HCT116 (cell line): ENCODE measurements at regions of chr17 and their contacts with region 1.

Region 1: DNA sequence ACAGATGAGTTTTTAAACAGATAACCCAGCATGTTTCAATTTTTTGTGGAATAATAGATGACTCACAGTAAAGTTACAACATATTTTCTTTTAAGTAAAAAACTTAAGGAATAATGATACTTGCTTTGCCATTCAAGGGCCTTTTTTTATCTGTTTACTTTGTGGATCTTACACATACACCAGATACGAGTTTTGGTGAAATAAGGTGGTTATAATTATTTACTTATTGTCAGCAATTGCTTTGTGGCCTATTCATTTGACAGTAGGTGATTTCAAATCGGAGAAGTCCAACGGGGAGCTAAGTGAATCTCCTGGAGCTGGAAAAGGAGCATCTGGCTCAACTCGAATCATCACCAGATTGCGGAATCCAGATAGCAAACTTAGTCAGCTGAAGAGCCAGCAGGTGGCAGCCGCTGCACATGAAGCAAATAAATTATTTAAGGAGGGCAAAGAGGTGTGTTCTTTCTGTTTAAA is 66.3 kb downstream of the BPTF start:
- DNase-seq: peak; percentile 6
- ATAC-seq: peak; percentile 57; the same call in 1 of the 2 replicates
- H3K4me3 ChIP-seq: no peak overlapping the region
- H3K27ac ChIP-seq: no peak overlapping the region
- H3K4me1 ChIP-seq: no peaks in the 10 kb centered on the region
- H3K27me3 ChIP-seq: no peaks in the 10 kb centered on the region
- CTCF ChIP-seq: peak; percentile 13 to 43 (median 39); a peak in 5 of 6 replicates
- POLR2A ChIP-seq: no peak
- RAD21 ChIP-seq: peak; percentile 41

Region 2: DNA sequence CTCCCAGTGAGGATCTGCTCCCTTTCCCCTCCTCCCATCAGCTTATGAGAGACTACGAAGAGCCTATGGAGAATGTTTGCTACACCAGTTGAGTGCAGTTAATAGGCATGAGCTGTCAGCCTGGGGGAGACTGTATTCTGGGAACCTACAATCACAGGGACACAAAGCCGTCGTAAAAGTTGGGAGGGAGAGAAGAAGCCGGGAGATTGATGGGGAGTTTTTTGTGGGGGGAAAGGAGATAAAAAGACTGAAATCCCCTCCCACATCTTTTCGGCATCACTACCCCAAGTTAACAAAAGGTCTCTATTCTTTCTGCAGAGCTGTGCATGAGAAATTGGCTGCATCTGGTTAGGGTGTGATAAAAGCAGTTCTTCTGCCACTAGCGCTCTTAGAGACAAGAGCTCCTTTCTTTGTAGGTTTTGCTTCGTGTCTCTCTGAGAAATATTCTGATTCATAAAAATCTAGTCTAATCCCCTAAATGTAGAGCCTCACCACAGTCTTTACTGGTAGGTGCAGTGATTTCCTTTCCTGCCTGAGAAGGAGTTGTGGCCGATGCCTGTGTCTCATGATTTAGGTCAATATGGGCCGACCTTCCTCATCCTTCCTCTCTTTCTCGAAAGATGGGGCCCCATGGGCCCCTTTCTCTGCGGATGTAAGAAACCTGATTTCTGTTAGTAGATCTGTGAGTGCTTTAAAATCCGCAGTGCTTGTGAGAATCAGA is 11.1 kb after region 1 on chr17:
- CTCF ChIA-PET with region 1: no interaction called
- POLR2A ChIA-PET with region 1: no interaction called
- RAD21 ChIA-PET with region 1: no interaction called
- intact Hi-C with region 1: loop called (anchors 1 kb)
- DNase-seq: no peak
- ATAC-seq: peak; percentile 25; the same call in 1 of the 2 replicates
- H3K4me3 ChIP-seq: no peak overlapping the region
- H3K27ac ChIP-seq: no peak overlapping the region
- H3K4me1 ChIP-seq: no peaks in the 10 kb centered on the region
- H3K27me3 ChIP-seq: no peaks in the 10 kb centered on the region
- CTCF ChIP-seq: no peak
- POLR2A ChIP-seq: no peak
- RAD21 ChIP-seq: no peak